ENCODE measurements at regions of chr16 and their contacts with region 1.

Region 1: DNA sequence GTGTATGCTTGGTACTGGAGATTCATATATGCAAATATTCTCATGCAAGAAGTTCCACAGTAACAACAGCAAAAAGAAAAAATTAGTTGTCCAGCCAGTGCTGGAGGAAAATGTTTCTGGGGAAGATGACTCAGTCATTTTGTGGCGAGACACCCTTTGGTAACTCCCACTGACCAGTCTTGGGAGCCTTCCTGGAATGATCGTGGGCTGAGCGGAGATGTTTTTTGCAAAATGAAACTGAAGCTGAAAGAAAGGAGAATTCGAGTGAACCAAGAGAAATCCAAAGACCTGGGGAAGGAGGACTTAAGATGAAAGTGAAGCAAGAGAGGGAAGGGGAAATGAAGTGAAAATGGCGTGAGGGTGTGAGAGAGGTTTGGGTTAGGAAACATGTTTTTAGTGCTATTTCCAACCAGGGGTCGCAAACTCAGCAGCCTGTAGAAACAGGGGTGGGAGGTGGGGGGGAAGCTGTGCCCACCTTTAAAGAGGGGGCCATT is 5.2 kb downstream of the ITPRIPL2 start:
- DNase-seq: no peak
- ATAC-seq: no peak
- H3K4me3 ChIP-seq: peak overlapping the region; percentile 15 to 21
- H3K27ac ChIP-seq: peak overlapping the region; percentile 78
- H3K4me1 ChIP-seq: peaks cover 43% of the 10 kb centered on the region
- H3K27me3 ChIP-seq: no peaks in the 10 kb centered on the region
- CTCF ChIP-seq: no peak

Region 2: DNA sequence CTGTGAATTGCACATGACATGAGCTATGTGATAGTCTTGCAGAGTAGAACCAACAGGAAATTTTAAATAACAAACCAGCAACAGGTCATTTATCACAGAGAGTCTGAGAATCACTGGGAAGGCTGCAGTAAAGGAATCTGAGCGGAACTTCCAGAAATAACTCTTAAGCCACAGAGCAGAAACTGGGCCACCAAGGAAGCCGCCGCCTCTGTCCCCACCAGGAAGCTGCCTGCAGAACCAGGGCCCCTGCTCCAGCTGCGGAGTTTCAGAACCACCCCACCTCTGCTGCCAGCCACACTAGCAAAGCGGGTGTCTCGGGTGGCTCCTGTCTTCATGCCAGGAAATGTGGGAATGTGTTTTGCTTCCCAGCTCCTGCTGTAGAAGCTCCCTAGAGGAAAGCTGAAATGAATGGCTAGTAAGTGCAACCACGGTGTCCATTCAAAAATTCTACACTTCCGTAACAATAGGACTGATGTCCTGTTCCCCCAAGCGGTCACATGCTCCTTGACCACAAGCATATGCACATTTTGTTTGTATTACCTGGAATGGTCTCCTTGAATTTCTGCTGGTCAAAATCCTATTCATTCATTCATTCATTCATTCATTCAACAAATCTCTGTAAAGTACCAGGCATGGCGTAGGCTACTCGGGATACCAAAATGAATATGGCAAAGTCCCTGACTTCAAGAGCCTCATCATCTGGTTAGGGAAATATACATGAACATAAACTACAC is 12.9 kb before region 1 on chr16:
- CTCF ChIA-PET with region 1: interaction called, 16 read pairs
- POLR2A ChIA-PET with region 1: no interaction called
- in situ Hi-C with region 1: no loop called
- intact Hi-C with region 1: no loop called
- DNase-seq: no peak
- ATAC-seq: no peak
- H3K4me3 ChIP-seq: no peak overlapping the region
- H3K27ac ChIP-seq: no peak overlapping the region
- H3K4me1 ChIP-seq: peaks cover 13% of the 10 kb centered on the region; the same call in 1 of the 2 replicates
- H3K27me3 ChIP-seq: no peaks in the 10 kb centered on the region
- CTCF ChIP-seq: no peak

Region 3: GRCh38 chr16:19145010-19145409 is 26.0 kb after region 1 on chr16:
- CTCF ChIA-PET with region 1: interaction called, 10 read pairs
- POLR2A ChIA-PET with region 1: no interaction called
- in situ Hi-C with region 1: no loop called
- intact Hi-C with region 1: no loop called
- DNase-seq: no peak
- ATAC-seq: no peak
- H3K4me3 ChIP-seq: no peak overlapping the region
- H3K27ac ChIP-seq: no peak overlapping the region
- H3K4me1 ChIP-seq: peaks cover 4% of the 10 kb centered on the region; the same call in 1 of the 2 replicates
- H3K27me3 ChIP-seq: 0 out of 2 replicates have a peak, but pooled peaks cover 2% of the 10 kb centered on the region
- CTCF ChIP-seq: no peak